CD8-positive, alpha-beta T cell (primary cell): ENCODE measurements at regions of chr10 and their contacts with region 1.

Region 1: DNA sequence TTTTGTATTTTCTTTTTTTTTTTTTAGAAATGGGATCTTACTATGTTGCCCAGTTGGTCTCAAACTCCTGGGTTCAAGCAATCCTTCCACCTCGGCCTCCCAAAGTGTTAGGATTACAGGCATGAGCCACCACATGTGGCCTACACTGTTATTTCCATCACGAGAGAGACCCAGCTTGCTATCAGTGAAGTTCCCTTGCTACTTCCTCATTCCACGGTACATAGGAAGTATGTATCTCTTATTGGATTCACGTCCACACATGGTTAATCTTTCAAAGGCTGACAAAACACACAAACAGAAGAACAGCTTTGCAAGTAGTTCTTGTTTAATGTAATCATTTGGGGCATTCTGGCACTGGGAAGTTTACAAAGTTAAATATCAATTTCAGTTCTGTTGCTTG is 50.9 kb downstream of the DCLRE1A start:
- DNase-seq: no peak
- ATAC-seq: no peak
- H3K4me3 ChIP-seq: no peak overlapping the region
- H3K4me3 Mint-ChIP-seq: no peak overlapping the region
- H3K27ac ChIP-seq: no peak overlapping the region
- H3K27ac Mint-ChIP-seq: no peak overlapping the region
- H3K4me1 ChIP-seq: no peaks in the 10 kb centered on the region
- H3K4me1 Mint-ChIP-seq: no peaks in the 10 kb centered on the region
- H3K27me3 ChIP-seq: no peaks in the 10 kb centered on the region
- H3K27me3 Mint-ChIP-seq: peaks cover 5% of the 10 kb centered on the region
- CTCF ChIP-seq: no peak

Region 2: DNA sequence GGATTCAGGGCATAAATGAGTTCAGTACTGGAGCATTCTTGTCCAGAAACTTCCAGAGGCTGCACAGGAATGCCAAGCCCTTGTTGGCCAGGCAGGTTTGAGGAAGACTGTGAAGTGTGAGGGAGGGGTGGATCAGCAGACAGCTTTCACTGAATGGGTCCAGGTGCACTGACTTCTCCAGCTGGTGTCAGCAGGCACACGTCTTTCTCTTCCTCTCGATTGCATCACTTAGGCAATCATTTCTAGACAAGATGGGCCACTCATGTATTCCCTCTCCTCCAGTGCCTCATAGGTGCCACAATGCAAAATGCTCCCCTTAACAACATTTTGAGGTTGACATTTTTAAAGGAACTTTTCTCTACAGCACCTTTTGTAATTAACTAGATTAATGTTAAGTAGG is 67.1 kb before region 1 on chr10:
- CTCF ChIA-PET with region 1: no interaction called
- POLR2A ChIA-PET with region 1: no interaction called
- intact Hi-C with region 1: no loop called
- DNase-seq: no peak
- ATAC-seq: no peak
- H3K4me3 ChIP-seq: no peak overlapping the region
- H3K4me3 Mint-ChIP-seq: no peak overlapping the region
- H3K27ac ChIP-seq: no peak overlapping the region
- H3K27ac Mint-ChIP-seq: no peak overlapping the region
- H3K4me1 ChIP-seq: no peaks in the 10 kb centered on the region
- H3K4me1 Mint-ChIP-seq: no peaks in the 10 kb centered on the region
- H3K27me3 ChIP-seq: no peaks in the 10 kb centered on the region
- H3K27me3 Mint-ChIP-seq: peaks cover 5% of the 10 kb centered on the region
- CTCF ChIP-seq: no peak

Region 3: DNA sequence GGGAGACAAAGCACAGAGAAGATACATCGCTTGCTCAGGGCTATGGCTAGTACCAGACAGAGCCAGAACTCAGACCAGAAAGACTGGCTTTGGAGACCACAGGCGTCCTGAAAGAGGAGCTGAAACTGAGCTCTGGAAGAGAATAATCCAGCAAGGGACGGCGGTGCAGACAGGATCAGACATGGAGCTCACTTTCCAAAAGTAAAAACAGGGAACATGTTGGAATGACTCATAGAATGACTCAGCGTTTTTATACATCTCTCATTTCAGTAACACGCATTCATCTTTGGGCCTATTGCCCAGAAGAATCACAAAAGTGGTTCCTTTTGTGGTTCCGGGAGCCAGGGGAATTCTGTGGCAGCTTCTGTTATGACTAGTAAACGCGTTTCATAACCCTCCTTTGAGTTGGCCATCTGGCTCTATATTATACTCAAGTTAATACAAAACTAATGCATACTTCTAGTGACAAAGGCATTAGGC is 14.4 kb before region 1 on chr10:
- CTCF ChIA-PET with region 1: interaction called, 14 read pairs
- POLR2A ChIA-PET with region 1: interaction called, 3 read pairs
- intact Hi-C with region 1: no loop called
- DNase-seq: peak in 1 of 9 experiments; percentile 4
- ATAC-seq: no peak
- H3K4me3 ChIP-seq: no peak overlapping the region
- H3K4me3 Mint-ChIP-seq: no peak overlapping the region
- H3K27ac ChIP-seq: no peak overlapping the region
- H3K27ac Mint-ChIP-seq: no peak overlapping the region
- H3K4me1 ChIP-seq: no peaks in the 10 kb centered on the region
- H3K4me1 Mint-ChIP-seq: no peaks in the 10 kb centered on the region
- H3K27me3 ChIP-seq: no peaks in the 10 kb centered on the region
- H3K27me3 Mint-ChIP-seq: peaks cover 14% of the 10 kb centered on the region
- CTCF ChIP-seq: no peak

Region 4: GRCh38 chr10:113993489-113993991 is 190.5 kb after region 1 on chr10:
- CTCF ChIA-PET with region 1: no interaction called
- POLR2A ChIA-PET with region 1: no interaction called
- intact Hi-C with region 1: loop called (anchors 5 kb)
- DNase-seq: peak in 1 of 9 experiments; percentile 12
- ATAC-seq: no peak
- H3K4me3 ChIP-seq: no peak overlapping the region
- H3K4me3 Mint-ChIP-seq: no peak overlapping the region
- H3K27ac ChIP-seq: no peak overlapping the region
- H3K27ac Mint-ChIP-seq: no peak overlapping the region
- H3K4me1 ChIP-seq: no peaks in the 10 kb centered on the region
- H3K4me1 Mint-ChIP-seq: no peaks in the 10 kb centered on the region
- H3K27me3 ChIP-seq: peaks cover 0 to 6% of the 10 kb centered on the region in 2 experiments
- H3K27me3 Mint-ChIP-seq: peaks cover 15% of the 10 kb centered on the region
- CTCF ChIP-seq: no peak

Region 5: GRCh38 chr10:114103284-114103683 is 300.3 kb after region 1 on chr10:
- CTCF ChIA-PET with region 1: interaction called, 103 read pairs
- POLR2A ChIA-PET with region 1: interaction called, 4 read pairs
- intact Hi-C with region 1: loop called in 1 of 2 experiments (anchors 1 kb)
- DNase-seq: peak in 2 of 9 experiments; percentile 51 to 63
- ATAC-seq: no peak
- H3K4me3 ChIP-seq: no peak overlapping the region
- H3K4me3 Mint-ChIP-seq: no peak overlapping the region
- H3K27ac ChIP-seq: no peak overlapping the region
- H3K27ac Mint-ChIP-seq: no peak overlapping the region
- H3K4me1 ChIP-seq: peaks cover 11% of the 10 kb centered on the region
- H3K4me1 Mint-ChIP-seq: peaks cover 29% of the 10 kb centered on the region
- H3K27me3 ChIP-seq: peaks cover 7 to 10% of the 10 kb centered on the region in 2 experiments
- H3K27me3 Mint-ChIP-seq: peaks cover 26% of the 10 kb centered on the region
- CTCF ChIP-seq: peak; percentile 56

Region 6: DNA sequence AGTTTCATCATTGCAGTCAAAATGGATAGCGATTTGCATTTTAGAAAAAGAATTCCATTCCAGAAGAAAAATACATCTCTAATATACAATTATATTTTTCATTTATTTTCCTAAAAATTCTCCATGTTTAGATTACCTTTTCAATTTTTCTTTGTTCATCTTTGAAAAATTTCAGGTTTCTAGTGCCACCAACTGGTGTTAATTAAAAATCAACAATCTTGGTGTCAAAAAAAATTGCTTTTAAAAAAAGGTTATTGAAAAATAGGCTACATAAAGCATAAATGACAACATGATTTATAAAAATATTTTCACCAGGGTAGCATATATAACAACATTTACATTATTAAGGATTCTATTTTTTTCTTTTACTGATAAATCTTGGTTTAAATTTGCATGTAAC is 318.0 kb after region 1 on chr10:
- CTCF ChIA-PET with region 1: interaction called, 4 read pairs
- POLR2A ChIA-PET with region 1: no interaction called
- intact Hi-C with region 1: loop called in 1 of 2 experiments (anchors 5 kb)
- DNase-seq: no peak
- ATAC-seq: no peak
- H3K4me3 ChIP-seq: no peak overlapping the region
- H3K4me3 Mint-ChIP-seq: no peak overlapping the region
- H3K27ac ChIP-seq: no peak overlapping the region
- H3K27ac Mint-ChIP-seq: no peak overlapping the region
- H3K4me1 ChIP-seq: no peaks in the 10 kb centered on the region
- H3K4me1 Mint-ChIP-seq: no peaks in the 10 kb centered on the region
- H3K27me3 ChIP-seq: no peaks in the 10 kb centered on the region
- H3K27me3 Mint-ChIP-seq: no peaks in the 10 kb centered on the region
- CTCF ChIP-seq: peak; percentile 12

Region 7: DNA sequence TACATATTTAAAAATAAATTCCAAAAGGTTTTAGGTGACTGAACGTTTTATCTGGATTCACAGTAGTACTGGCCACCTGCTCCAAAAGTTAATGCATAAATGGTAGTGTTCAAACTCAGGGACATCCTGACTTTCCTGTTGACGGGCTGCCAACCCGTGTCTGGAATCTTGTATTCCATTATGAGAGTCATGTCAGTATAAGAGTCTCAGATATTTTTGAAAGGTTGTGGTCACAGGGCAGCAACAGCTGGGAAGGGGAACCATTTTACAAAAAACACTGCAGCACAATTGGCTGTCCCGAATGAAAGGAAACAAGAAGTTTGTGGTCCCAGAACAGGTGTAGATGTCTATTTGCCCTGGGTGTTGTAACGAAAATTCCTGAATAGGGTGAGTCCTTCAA is 379.0 kb after region 1 on chr10:
- CTCF ChIA-PET with region 1: no interaction called
- POLR2A ChIA-PET with region 1: no interaction called
- intact Hi-C with region 1: no loop called
- DNase-seq: no peak
- ATAC-seq: no peak
- H3K4me3 ChIP-seq: no peak overlapping the region
- H3K4me3 Mint-ChIP-seq: no peak overlapping the region
- H3K27ac ChIP-seq: no peak overlapping the region
- H3K27ac Mint-ChIP-seq: no peak overlapping the region
- H3K4me1 ChIP-seq: no peaks in the 10 kb centered on the region
- H3K4me1 Mint-ChIP-seq: no peaks in the 10 kb centered on the region
- H3K27me3 ChIP-seq: no peaks in the 10 kb centered on the region
- H3K27me3 Mint-ChIP-seq: peaks cover 3% of the 10 kb centered on the region
- CTCF ChIP-seq: no peak

Region 8: GRCh38 chr10:114779803-114780609 is 977.0 kb after region 1 on chr10:
- CTCF ChIA-PET with region 1: no interaction called
- POLR2A ChIA-PET with region 1: no interaction called
- intact Hi-C with region 1: loop called in 1 of 2 experiments (anchors 2 kb)
- DNase-seq: no peak
- ATAC-seq: no peak
- H3K4me3 ChIP-seq: no peak overlapping the region
- H3K4me3 Mint-ChIP-seq: no peak overlapping the region
- H3K27ac ChIP-seq: no peak overlapping the region
- H3K27ac Mint-ChIP-seq: no peak overlapping the region
- H3K4me1 ChIP-seq: no peaks in the 10 kb centered on the region
- H3K4me1 Mint-ChIP-seq: no peaks in the 10 kb centered on the region
- H3K27me3 ChIP-seq: no peaks in the 10 kb centered on the region
- H3K27me3 Mint-ChIP-seq: peaks cover 11% of the 10 kb centered on the region
- CTCF ChIP-seq: no peak